ENCODE measurements at regions of chr19 and their contacts with region 1.

Region 1: DNA sequence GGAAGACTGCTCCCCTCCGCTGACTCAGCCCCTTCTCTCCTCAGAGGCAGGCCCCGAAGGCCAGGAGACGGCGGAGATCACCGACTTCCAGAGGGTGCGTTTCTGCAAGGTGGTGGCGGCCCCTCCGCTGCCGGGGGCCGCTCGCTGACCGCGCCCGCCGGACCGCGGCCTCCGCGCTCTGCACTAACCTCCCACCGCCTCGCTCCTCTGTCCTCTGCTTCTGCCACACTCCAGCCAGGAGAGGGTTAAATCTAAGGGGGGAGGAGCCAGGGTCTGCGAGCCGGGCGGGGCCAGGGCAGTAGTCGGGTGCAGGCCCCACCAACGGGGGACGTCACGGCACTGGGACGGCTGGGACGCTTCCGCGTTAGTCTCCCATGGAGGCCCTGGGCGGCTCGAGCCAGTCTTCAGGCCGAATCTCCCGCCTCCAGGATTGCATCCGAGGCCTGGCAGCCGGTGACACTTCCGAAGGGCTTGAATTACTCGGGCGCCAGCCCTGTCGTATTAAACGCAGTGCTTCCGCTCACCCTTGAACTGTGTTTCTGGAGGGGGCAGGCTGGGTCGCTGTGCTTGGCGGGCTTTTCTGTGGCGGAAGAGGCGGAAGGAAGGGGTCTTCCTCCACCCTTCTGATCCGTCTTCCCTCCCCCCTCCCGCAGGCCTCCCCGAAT is 1.2 kb upstream of the INAFM1 start:
- DNase-seq: peak; percentile 94
- ATAC-seq: peak; percentile 77
- H3K4me3 Mint-ChIP-seq: peak overlapping the region; percentile 86
- H3K27ac Mint-ChIP-seq: peak overlapping the region; percentile 93
- H3K4me1 Mint-ChIP-seq: peaks cover 22% of the 10 kb centered on the region
- H3K27me3 Mint-ChIP-seq: no peaks in the 10 kb centered on the region

Region 2: DNA sequence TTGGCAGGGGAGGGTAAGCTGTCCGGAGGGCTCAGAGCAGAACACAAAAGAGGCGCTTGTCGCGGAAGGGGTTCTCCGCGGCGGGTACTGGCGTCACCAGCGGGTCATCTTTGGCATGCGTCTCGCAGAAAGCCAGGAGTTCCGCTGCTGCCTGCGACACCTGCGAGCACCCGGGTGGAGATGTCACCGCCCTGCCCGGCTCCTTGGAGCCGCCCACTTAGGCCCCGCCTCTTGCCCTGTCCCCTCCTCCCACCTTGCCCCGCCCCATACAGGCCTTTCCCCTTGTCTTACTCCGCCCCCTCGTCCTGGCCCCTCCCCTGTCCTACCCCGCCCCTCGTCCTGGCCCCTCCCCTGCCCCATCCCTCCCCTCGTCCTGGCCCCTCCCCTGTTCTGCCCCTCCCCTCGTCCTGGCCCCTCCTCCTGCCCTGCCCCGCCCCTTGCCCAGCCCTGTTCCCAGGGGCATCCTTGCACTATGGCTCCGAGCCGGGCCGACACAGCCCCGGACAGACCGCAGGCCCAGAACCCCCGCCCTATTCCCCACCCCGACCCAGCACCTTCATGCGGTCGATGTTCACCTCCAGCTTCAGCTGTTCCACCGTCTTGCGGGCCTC is 639.3 kb before region 1 on chr19:
- CTCF ChIA-PET with region 1: interaction called, 3 read pairs
- POLR2A ChIA-PET with region 1: no interaction called
- intact Hi-C with region 1: loop called in 1 of 2 experiments (anchors 1 kb)
- DNase-seq: peak; percentile 99
- ATAC-seq: peak; percentile 63
- H3K4me3 Mint-ChIP-seq: peak overlapping the region; percentile 73
- H3K27ac Mint-ChIP-seq: peak overlapping the region; percentile 72
- H3K4me1 Mint-ChIP-seq: peaks cover 21% of the 10 kb centered on the region
- H3K27me3 Mint-ChIP-seq: no peaks in the 10 kb centered on the region

Region 3: DNA sequence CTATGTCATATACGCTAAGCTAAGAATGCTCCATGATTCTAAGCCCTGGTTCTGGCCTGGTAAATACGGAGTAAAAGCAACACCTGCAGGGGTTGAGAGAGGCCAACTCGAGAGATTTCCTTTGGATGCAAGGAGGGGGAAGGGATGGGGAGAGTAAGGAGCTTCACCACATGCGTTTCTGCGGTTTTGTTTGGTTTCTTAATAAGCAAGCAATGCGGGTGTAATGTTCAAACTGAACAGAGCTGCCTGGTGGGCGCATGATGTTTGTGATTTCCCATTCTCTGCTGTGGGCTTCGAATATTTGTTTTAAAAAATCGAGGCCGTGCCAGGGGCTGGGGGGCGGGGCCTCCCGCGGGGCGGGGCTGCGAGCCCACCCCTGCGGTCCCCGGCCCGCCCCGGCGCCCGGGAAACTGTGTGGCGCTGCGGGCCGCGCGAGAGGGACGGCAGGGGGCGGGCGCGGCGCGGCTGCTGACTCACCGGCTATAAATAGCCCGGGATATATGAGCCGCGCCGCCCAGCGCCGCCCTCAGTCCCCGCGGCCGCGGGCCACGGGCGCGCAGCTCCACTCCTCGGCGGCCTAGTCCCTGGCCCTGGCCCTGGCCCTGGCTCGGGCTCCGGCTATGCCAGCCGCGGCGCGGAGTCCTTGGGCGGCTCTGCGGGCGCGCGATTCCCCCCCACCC is 47.6 kb before region 1 on chr19:
- CTCF ChIA-PET with region 1: interaction called, 4 read pairs
- POLR2A ChIA-PET with region 1: interaction called, 7 read pairs
- intact Hi-C with region 1: loop called in 1 of 2 experiments (anchors 1 kb)
- DNase-seq: peak; percentile 93
- ATAC-seq: peak; percentile 70
- H3K4me3 Mint-ChIP-seq: peak overlapping the region; percentile 77
- H3K27ac Mint-ChIP-seq: no peak overlapping the region
- H3K4me1 Mint-ChIP-seq: peaks cover 16% of the 10 kb centered on the region
- H3K27me3 Mint-ChIP-seq: no peaks in the 10 kb centered on the region

Region 4: GRCh38 chr19:47348819-47349795 is 75.7 kb after region 1 on chr19 and contains the start of gene DHX34:
- CTCF ChIA-PET with region 1: interaction called, 9 read pairs
- POLR2A ChIA-PET with region 1: interaction called, 7 read pairs
- intact Hi-C with region 1: loop called in 1 of 2 experiments (anchors 1 kb)
- DNase-seq: peak; percentile 99
- ATAC-seq: peak; percentile 98
- H3K4me3 Mint-ChIP-seq: peak within 1 kb of the TSS; percentile 92
- H3K27ac Mint-ChIP-seq: peak within 1 kb of the TSS; percentile 94
- H3K4me1 Mint-ChIP-seq: peaks cover 35% of the 10 kb centered on the region
- H3K27me3 Mint-ChIP-seq: no peaks in the 10 kb centered on the region
- total RNA-seq, gene DHX34: 15.4 to 17.9 TPM

Region 5: DNA sequence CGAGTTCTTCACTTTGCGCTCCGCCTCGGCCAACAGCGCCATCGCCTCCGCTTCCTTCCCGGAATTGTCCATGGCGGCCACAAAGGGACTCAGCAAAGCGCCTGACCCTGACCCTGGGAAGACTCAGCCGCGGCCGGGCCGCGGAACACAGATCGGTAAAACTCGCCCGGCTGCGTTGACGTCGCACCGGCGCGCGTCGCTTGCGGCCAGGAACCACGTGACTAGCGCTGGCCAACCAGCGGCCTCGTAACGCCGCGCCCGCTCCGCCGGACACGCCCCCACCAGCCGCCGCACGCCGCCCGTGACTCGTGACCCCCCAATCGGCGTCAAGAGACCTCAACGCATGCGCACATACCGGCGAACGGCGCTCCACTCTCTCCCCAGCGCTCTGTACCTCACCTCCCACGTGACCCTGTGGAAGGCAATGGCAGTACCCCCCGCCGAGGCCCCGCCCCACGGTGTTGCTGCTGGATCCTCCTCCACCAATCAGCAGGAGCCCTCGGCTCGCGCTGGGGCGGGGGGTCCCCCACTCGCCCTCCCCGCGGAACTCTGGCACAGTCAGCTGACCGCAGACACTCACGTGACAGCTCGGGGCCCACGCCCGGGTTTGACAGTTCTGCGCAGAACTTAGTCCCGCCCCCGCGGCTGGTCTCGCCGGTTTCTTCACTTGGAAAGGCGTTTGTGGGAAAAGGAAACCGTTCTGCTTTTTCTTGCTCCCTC is 241.6 kb after region 1 on chr19 and contains the start of gene NAPA:
- CTCF ChIA-PET with region 1: no interaction called
- POLR2A ChIA-PET with region 1: no interaction called
- intact Hi-C with region 1: loop called in 1 of 2 experiments (anchors 1 kb)
- DNase-seq: peak; percentile 100
- ATAC-seq: peak; percentile 98
- H3K4me3 Mint-ChIP-seq: peak within 1 kb of the TSS; percentile 95
- H3K27ac Mint-ChIP-seq: peak within 1 kb of the TSS; percentile 99
- H3K4me1 Mint-ChIP-seq: peaks cover 76% of the 10 kb centered on the region
- H3K27me3 Mint-ChIP-seq: no peaks in the 10 kb centered on the region
- total RNA-seq, gene NAPA: 54.2 to 68.8 TPM

Region 6: GRCh38 chr19:47582320-47582909 is 309.0 kb after region 1 on chr19:
- CTCF ChIA-PET with region 1: no interaction called
- POLR2A ChIA-PET with region 1: no interaction called
- intact Hi-C with region 1: no loop called
- DNase-seq: no peak
- ATAC-seq: peak; percentile 39
- H3K4me3 Mint-ChIP-seq: no peak overlapping the region
- H3K27ac Mint-ChIP-seq: peak overlapping the region; percentile 73
- H3K4me1 Mint-ChIP-seq: peaks cover 33% of the 10 kb centered on the region
- H3K27me3 Mint-ChIP-seq: no peaks in the 10 kb centered on the region

Region 7: GRCh38 chr19:47778089-47778953 is 504.9 kb after region 1 on chr19 and contains the start of gene SELENOW:
- CTCF ChIA-PET with region 1: no interaction called
- POLR2A ChIA-PET with region 1: no interaction called
- intact Hi-C with region 1: loop called in 1 of 2 experiments (anchors 1 kb)
- DNase-seq: peak; percentile 87
- ATAC-seq: peak; percentile 92
- H3K4me3 Mint-ChIP-seq: peak within 1 kb of the TSS; percentile 95
- H3K27ac Mint-ChIP-seq: peak within 1 kb of the TSS; percentile 92
- H3K4me1 Mint-ChIP-seq: peaks cover 20% of the 10 kb centered on the region
- H3K27me3 Mint-ChIP-seq: no peaks in the 10 kb centered on the region
- total RNA-seq, gene SELENOW: 150 to 178 TPM

Measured in activated CD4-positive, alpha-beta T cell treated with anti-CD3 and anti-CD28 coated beads for 36 hours (primary cell).